CD4-positive, alpha-beta T cell (primary cell): ENCODE measurements at regions of chr12 and their contacts with region 1.

Region 1: GRCh38 chr12:112992541-112993398 is 14.5 kb downstream of the OAS2 start:
- DNase-seq: peak; percentile 16 to 76 (median 56)
- ATAC-seq: peak; percentile 87
- H3K4me3 ChIP-seq: no peak overlapping the region
- H3K4me3 Mint-ChIP-seq: no peak overlapping the region
- H3K27ac ChIP-seq: no peak overlapping the region
- H3K27ac Mint-ChIP-seq: peak overlapping the region; percentile 7
- H3K4me1 ChIP-seq: peaks cover 6% of the 10 kb centered on the region
- H3K4me1 Mint-ChIP-seq: peaks cover 25% of the 10 kb centered on the region
- H3K27me3 ChIP-seq: no peaks in the 10 kb centered on the region
- H3K27me3 Mint-ChIP-seq: no peaks in the 10 kb centered on the region
- CTCF ChIP-seq: peak; percentile 74

Region 2: GRCh38 chr12:112447106-112447505 is 545.7 kb before region 1 on chr12:
- CTCF ChIA-PET with region 1: no interaction called
- POLR2A ChIA-PET with region 1: no interaction called
- intact Hi-C with region 1: no loop called
- DNase-seq: no peak
- ATAC-seq: no peak
- H3K4me3 ChIP-seq: no peak overlapping the region
- H3K4me3 Mint-ChIP-seq: no peak overlapping the region
- H3K27ac ChIP-seq: peak overlapping the region in 1 of 2 donors; percentile 15
- H3K27ac Mint-ChIP-seq: peak overlapping the region; percentile 59
- H3K4me1 ChIP-seq: peaks cover 10% of the 10 kb centered on the region
- H3K4me1 Mint-ChIP-seq: peaks cover 13% of the 10 kb centered on the region
- H3K27me3 ChIP-seq: no peaks in the 10 kb centered on the region
- H3K27me3 Mint-ChIP-seq: no peaks in the 10 kb centered on the region
- CTCF ChIP-seq: no peak

Region 3: GRCh38 chr12:112948806-112949205 is 44.0 kb before region 1 on chr12:
- CTCF ChIA-PET with region 1: no interaction called
- POLR2A ChIA-PET with region 1: no interaction called
- intact Hi-C with region 1: loop called in 1 of 2 experiments (anchors 2 kb)
- DNase-seq: no peak
- ATAC-seq: no peak
- H3K4me3 ChIP-seq: no peak overlapping the region
- H3K4me3 Mint-ChIP-seq: no peak overlapping the region
- H3K27ac ChIP-seq: no peak overlapping the region
- H3K27ac Mint-ChIP-seq: no peak overlapping the region
- H3K4me1 ChIP-seq: no peaks in the 10 kb centered on the region
- H3K4me1 Mint-ChIP-seq: no peaks in the 10 kb centered on the region
- H3K27me3 ChIP-seq: no peaks in the 10 kb centered on the region
- H3K27me3 Mint-ChIP-seq: no peaks in the 10 kb centered on the region
- CTCF ChIP-seq: no peak

Region 4: GRCh38 chr12:113103756-113104450 is 111.1 kb after region 1 on chr12:
- CTCF ChIA-PET with region 1: interaction called, 3 read pairs
- POLR2A ChIA-PET with region 1: no interaction called
- intact Hi-C with region 1: loop called (anchors 5 kb)
- DNase-seq: peak; percentile 47 to 87 (median 70)
- ATAC-seq: peak; percentile 92
- H3K4me3 ChIP-seq: peak overlapping the region; percentile 58
- H3K4me3 Mint-ChIP-seq: peak overlapping the region; percentile 75
- H3K27ac ChIP-seq: no peak overlapping the region
- H3K27ac Mint-ChIP-seq: peak overlapping the region; percentile 78
- H3K4me1 ChIP-seq: peaks cover 15% of the 10 kb centered on the region
- H3K4me1 Mint-ChIP-seq: peaks cover 18% of the 10 kb centered on the region
- H3K27me3 ChIP-seq: no peaks in the 10 kb centered on the region
- H3K27me3 Mint-ChIP-seq: no peaks in the 10 kb centered on the region
- CTCF ChIP-seq: peak; percentile 30

Region 5: DNA sequence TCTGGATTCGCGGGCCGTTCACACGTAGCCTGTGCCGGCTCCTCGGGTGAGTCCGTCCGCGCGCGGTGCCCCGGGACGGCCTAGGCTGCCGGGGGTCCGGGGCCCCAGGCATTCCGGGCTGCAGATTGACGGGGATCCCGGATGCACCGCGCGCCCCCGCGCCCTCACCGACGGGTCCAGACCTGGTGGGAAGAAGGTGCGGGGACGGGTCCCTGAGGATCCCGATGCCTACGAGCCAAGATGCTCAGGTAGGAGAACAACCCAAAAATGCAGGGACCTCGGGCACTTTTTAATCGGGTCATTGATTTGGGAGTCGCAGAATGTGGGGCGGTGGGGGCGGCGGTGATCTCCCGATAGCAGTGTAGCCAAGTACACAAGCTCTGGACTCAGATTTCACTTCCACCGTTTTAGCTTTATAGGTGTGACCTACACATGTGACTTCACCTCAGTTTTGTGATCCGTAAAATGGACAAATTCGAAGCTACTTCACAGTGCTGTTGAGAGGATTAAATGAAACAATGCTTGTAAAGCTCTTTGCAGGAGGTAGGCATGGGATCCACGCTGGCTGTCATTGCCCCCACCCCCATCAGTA is 193.1 kb after region 1 on chr12:
- CTCF ChIA-PET with region 1: no interaction called
- POLR2A ChIA-PET with region 1: no interaction called
- intact Hi-C with region 1: no loop called
- DNase-seq: peak in 1 of 14 experiments; percentile 2
- ATAC-seq: peak; percentile 0
- H3K4me3 ChIP-seq: peak overlapping the region; percentile 94
- H3K4me3 Mint-ChIP-seq: peak overlapping the region; percentile 97
- H3K27ac ChIP-seq: peak overlapping the region; percentile 95 to 96
- H3K27ac Mint-ChIP-seq: peak overlapping the region; percentile 99
- H3K4me1 ChIP-seq: peaks cover 52% of the 10 kb centered on the region
- H3K4me1 Mint-ChIP-seq: peaks cover 40% of the 10 kb centered on the region
- H3K27me3 ChIP-seq: no peaks in the 10 kb centered on the region
- H3K27me3 Mint-ChIP-seq: no peaks in the 10 kb centered on the region
- CTCF ChIP-seq: no peak